ENCODE measurements at regions of chr18 and their contacts with region 1.

Region 1: GRCh38 chr18:44679056-44679905 is 1.4 kb upstream of the SETBP1 start:
- DNase-seq: peak; percentile 90 to 95 (median 94)
- ATAC-seq: peak; percentile 96 to 97
- H3K4me3 ChIP-seq: peak overlapping the region; percentile 84
- H3K27ac ChIP-seq: peak overlapping the region; percentile 96
- H3K4me1 ChIP-seq: no peaks in the 10 kb centered on the region
- H3K27me3 ChIP-seq: no peaks in the 10 kb centered on the region

Region 2: GRCh38 chr18:44130376-44130942 is 548.8 kb before region 1 on chr18:
- intact Hi-C with region 1: loop called in 1 of 4 experiments (anchors 10 kb)
- DNase-seq: peak in 2 of 3 donors; percentile 13 to 21
- ATAC-seq: peak; percentile 72 to 73
- H3K4me3 ChIP-seq: no peak overlapping the region
- H3K27ac ChIP-seq: no peak overlapping the region
- H3K4me1 ChIP-seq: no peaks in the 10 kb centered on the region
- H3K27me3 ChIP-seq: no peaks in the 10 kb centered on the region

Region 3: DNA sequence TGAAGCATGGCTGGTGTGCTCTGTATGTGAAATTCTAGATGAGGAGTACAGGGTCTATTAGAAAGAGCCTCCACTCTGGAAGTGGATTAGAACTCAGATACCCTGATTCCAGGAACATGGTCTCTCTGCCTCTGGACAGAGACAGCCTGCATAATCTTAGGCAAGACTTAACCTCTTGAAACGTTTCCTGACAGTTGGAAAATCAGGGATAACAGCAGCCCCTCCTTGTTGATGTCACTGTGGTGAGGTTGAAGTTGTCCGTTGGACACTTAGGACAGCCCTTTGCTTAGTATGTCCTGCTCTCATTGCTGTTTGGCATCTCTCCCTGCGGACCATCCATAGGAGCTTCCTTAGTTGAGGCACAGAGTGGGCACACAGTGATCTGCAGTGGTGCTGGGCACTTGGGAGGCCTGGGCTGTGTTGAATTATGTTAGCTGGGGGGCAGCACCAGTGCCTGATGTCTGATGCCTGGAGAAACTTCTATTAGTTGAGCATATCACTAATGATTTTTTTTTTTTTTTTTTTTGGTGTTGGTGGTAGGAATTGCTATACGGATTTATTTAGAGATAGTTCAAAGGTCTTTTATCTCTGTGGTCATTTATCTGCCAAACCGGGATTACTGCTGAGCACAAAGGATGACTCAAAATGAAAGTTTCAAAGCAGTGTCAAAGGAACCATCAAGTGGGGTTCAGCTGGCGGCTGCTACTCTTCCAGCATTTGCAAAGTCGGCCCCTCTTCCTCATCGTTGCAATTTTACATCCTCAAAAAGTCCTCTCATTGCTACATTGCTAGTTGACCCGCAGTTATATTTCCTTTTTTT is 30.2 kb after region 1 on chr18:
- intact Hi-C with region 1: no loop called
- DNase-seq: no peak
- ATAC-seq: peak; percentile 33 to 50
- H3K4me3 ChIP-seq: no peak overlapping the region
- H3K27ac ChIP-seq: peak overlapping the region; percentile 12
- H3K4me1 ChIP-seq: no peaks in the 10 kb centered on the region
- H3K27me3 ChIP-seq: no peaks in the 10 kb centered on the region

Region 4: GRCh38 chr18:44789710-44790109 is 110.4 kb after region 1 on chr18:
- intact Hi-C with region 1: loop called in 1 of 4 experiments (anchors 5 kb)
- DNase-seq: peak; percentile 49 to 60 (median 51)
- ATAC-seq: peak; percentile 67 to 95
- H3K4me3 ChIP-seq: no peak overlapping the region
- H3K27ac ChIP-seq: no peak overlapping the region
- H3K4me1 ChIP-seq: peaks cover 16% of the 10 kb centered on the region
- H3K27me3 ChIP-seq: no peaks in the 10 kb centered on the region

Region 5: DNA sequence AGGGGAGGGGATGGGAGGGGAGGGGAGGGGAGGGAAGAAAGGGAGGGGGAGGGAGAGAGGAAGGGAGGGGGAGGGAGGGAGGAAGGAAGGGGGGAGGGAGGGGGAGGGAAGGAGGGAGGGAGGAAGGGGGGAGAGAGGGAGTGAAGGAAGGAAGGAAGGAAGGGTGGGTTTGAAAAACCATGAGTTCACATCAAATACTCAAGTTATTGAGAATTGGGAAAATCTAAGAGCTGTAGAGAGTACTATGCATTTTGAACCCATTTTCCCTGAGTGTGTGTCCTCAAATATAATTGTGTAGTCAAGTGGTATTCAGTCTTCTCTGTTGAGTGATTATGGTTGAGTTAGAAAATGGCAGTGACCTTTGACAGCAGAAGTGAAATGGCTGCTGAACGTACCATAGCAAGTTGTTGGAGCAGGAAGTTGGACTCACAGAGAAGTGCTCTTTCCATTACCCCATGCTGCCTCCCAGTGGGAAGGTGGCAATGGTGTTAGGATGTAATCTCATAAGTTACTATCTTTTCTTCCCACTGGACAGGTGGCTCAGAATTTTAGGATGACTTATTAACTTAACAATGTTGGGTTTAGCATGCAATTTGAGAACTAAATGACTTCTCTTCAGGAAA is 216.0 kb after region 1 on chr18:
- intact Hi-C with region 1: loop called in 2 of 4 experiments (anchors 5 to 10 kb)
- DNase-seq: peak in 2 of 3 donors; percentile 24 to 62
- ATAC-seq: peak in 1 of 2 donors; percentile 70
- H3K4me3 ChIP-seq: no peak overlapping the region
- H3K27ac ChIP-seq: no peak overlapping the region
- H3K4me1 ChIP-seq: no peaks in the 10 kb centered on the region
- H3K27me3 ChIP-seq: no peaks in the 10 kb centered on the region

Measured in right cardiac atrium (tissue), 5 donors.